ENCODE measurements at regions of chr18 and their contacts with region 1.

Region 1: DNA sequence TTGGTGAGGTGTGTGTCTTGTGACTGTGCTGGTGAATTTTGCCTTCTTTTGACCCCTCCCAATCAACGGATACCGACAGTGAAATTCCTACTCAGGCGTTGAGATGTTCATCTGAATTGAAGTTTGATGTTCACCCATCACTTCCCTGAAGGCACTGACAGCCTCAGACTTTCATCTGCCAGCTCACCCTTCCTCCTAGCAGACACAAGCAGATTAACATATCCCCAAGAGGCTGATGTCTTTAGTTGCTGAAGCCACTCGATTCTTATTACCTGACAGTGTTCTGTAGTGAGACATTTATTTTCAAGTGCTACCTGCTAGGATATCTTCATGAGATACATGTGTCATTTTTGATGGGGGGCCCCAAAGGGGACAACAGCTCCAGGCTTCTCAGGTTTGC is 1330.1 kb upstream of the PIK3C3 start:
- DNase-seq: no peak
- ATAC-seq: no peak
- H3K4me3 ChIP-seq: no peak overlapping the region
- H3K27ac ChIP-seq: no peak overlapping the region
- H3K4me1 ChIP-seq: no peaks in the 10 kb centered on the region
- H3K27me3 ChIP-seq: no peaks in the 10 kb centered on the region
- CTCF ChIP-seq: no peak

Region 2: GRCh38 chr18:40607542-40608148 is 17.3 kb before region 1 on chr18:
- intact Hi-C with region 1: loop called in 1 of 10 experiments (anchors 1 kb)
- DNase-seq: no peak
- ATAC-seq: no peak
- H3K4me3 ChIP-seq: no peak overlapping the region
- H3K27ac ChIP-seq: no peak overlapping the region
- H3K4me1 ChIP-seq: no peaks in the 10 kb centered on the region
- H3K27me3 ChIP-seq: no peaks in the 10 kb centered on the region
- CTCF ChIP-seq: no peak